ENCODE measurements at regions of chr14 and their contacts with region 1.

Region 1: DNA sequence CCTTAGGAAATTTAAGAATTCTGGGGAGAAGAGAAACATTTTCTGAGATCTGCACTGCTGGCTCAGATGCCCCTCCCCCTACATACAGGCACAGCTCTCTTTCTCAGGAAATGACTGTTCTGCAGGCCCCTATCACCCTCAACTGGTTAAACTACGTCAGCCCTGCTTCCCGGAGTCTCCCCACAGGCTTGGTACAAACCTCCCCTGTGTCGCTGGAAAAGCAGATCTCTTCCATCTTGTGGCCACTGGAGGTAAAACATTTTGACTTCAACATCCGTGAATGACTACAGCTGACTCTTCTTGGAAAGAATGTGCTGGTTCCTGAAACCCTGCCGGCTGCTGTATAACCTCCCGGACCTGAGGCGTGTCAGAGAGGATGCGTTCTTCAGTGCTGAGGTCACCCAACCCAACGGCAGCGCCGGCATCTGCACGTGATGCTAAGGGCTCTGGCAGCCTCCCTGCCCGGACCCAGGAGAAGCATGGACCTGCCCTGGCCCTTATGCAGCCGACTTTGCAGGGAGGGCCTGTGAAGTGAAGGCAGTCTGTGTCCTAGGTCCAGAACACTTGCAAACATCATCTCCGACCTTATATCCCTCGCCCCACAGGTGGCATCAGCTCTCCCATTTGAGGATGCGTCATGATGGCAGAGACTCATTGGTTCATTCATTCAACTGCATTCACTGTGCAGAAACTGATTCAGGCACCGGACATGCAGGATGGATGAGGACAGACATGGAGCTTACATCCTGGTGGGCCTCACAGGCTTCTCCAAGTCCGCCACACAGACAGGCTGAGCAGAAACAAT is 129.3 kb downstream of the GCH1 start:
- DNase-seq: peak; percentile 73
- H3K4me3 Mint-ChIP-seq: peak overlapping the region; percentile 68
- H3K27ac Mint-ChIP-seq: peak overlapping the region; percentile 79
- H3K4me1 Mint-ChIP-seq: peaks cover 40% of the 10 kb centered on the region
- H3K27me3 Mint-ChIP-seq: peaks cover 40% of the 10 kb centered on the region

Region 2: DNA sequence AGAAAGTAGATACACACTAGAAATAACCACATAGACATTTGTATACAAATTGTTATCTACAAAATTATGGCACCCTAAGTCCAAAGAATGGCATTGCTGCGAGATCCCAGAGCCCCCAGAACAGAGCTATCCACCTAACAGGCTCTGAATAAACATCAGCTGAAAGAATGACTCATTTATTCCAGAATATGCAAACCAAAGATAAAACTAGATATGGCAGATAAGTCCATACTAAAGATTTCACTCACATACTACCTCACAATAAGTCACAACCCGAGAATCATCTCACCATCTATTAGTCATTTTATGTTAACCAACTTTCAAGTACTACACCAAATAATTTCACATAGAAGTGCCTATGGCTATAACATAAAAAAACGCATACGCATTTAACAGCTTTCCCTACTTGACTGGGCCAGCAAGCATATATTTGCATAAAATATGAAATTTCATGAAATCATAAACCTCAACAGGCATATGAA is 337.8 kb before region 1 on chr14:
- intact Hi-C with region 1: loop called (anchors 1 kb)
- DNase-seq: no peak
- H3K4me3 Mint-ChIP-seq: peak overlapping the region; percentile 74
- H3K27ac Mint-ChIP-seq: peak overlapping the region; percentile 89
- H3K4me1 Mint-ChIP-seq: peaks cover 73% of the 10 kb centered on the region
- H3K27me3 Mint-ChIP-seq: no peaks in the 10 kb centered on the region

Region 3: GRCh38 chr14:54565785-54566409 is 207.5 kb before region 1 on chr14:
- intact Hi-C with region 1: loop called (anchors 1 kb)
- DNase-seq: peak; percentile 61
- H3K4me3 Mint-ChIP-seq: peak overlapping the region; percentile 75
- H3K27ac Mint-ChIP-seq: no peak overlapping the region
- H3K4me1 Mint-ChIP-seq: peaks cover 21% of the 10 kb centered on the region
- H3K27me3 Mint-ChIP-seq: peaks cover 54% of the 10 kb centered on the region

Region 4: DNA sequence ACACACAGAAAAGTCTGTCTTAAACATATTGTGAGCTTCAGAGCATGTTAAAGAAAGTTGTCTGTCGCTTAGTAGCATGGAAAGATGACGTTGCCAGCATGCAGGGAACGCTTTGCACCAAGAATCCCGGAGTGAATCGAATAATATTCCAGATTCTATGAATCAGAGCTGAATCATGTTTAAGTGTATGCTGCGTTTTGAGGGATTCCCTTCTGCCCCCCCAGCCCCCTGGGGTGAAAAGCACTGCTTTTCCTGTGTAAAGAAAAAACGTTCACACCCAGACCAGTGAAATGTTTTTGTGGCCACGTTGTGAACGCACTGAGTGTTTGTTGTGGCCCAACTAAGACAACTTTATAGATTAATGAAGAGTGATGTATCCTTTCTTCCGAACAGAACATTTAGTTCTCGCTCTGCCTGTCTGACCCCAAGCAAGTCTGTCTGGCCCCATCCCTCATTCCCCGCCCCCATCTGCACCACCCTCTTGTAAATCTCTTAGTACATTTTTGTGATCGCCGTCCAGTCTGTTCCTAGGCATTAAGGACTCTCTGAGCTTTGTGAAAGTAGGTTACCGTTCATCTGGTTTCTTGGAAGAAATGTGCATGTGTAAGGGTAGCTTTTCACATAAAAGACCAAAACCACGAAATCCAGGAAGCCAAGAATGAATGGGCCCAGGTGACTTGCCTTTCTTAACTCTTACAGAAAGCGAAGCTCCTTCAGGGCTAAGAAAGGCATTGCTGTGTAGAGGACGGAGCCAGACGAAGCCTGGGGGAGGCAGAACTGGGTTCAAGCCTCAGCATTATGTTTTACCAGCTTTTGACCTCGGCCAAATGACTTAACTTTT is 103.4 kb before region 1 on chr14:
- intact Hi-C with region 1: loop called (anchors 1 kb)
- DNase-seq: peak; percentile 5
- H3K4me3 Mint-ChIP-seq: no peak overlapping the region
- H3K27ac Mint-ChIP-seq: peak overlapping the region; percentile 11
- H3K4me1 Mint-ChIP-seq: peaks cover 40% of the 10 kb centered on the region
- H3K27me3 Mint-ChIP-seq: peaks cover 59% of the 10 kb centered on the region

Region 5: GRCh38 chr14:54730156-54730961 is 43.0 kb before region 1 on chr14:
- intact Hi-C with region 1: loop called (anchors 1 kb)
- DNase-seq: peak; percentile 48
- H3K4me3 Mint-ChIP-seq: peak overlapping the region; percentile 28
- H3K27ac Mint-ChIP-seq: peak overlapping the region; percentile 56
- H3K4me1 Mint-ChIP-seq: peaks cover 36% of the 10 kb centered on the region
- H3K27me3 Mint-ChIP-seq: peaks cover 40% of the 10 kb centered on the region

Region 6: GRCh38 chr14:54787261-54787660 is 13.9 kb after region 1 on chr14:
- intact Hi-C with region 1: no loop called
- DNase-seq: no peak
- H3K4me3 Mint-ChIP-seq: no peak overlapping the region
- H3K27ac Mint-ChIP-seq: no peak overlapping the region
- H3K4me1 Mint-ChIP-seq: peaks cover 10% of the 10 kb centered on the region
- H3K27me3 Mint-ChIP-seq: peaks cover 1% of the 10 kb centered on the region

Region 7: GRCh38 chr14:54798465-54799124 is 25.2 kb after region 1 on chr14:
- intact Hi-C with region 1: no loop called
- DNase-seq: no peak
- H3K4me3 Mint-ChIP-seq: no peak overlapping the region
- H3K27ac Mint-ChIP-seq: no peak overlapping the region
- H3K4me1 Mint-ChIP-seq: no peaks in the 10 kb centered on the region
- H3K27me3 Mint-ChIP-seq: peaks cover 30% of the 10 kb centered on the region

Region 8: DNA sequence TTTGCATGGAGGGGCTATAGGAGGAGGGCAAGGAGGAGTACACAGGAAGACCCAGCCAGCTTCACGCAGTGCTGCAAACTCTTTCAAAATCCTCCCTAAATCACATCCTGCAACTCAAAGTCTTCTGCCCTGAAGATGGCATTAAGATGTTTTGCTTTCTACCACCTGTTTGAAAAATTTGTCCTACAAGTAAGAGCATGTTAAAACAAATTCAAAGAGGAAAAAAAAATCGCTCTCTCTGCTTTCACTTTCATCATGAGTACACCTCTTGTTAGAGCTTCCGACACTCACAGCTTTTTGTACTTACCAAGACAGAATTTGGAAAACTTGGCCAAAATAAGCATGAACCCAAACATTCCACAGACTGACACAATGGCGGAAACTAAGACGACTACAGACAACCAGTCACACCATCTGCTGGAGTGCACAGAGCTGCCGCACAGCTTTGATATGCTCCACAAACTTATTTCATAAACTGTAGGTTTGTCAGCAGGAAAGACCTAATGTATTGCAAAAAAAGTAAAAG is 107.9 kb after region 1 on chr14:
- intact Hi-C with region 1: loop called (anchors 1 kb)
- DNase-seq: peak; percentile 30
- H3K4me3 Mint-ChIP-seq: peak overlapping the region; percentile 86
- H3K27ac Mint-ChIP-seq: peak overlapping the region; percentile 94
- H3K4me1 Mint-ChIP-seq: peaks cover 53% of the 10 kb centered on the region
- H3K27me3 Mint-ChIP-seq: no peaks in the 10 kb centered on the region

Measured in activated T-helper 1 cell treated with anti-CD3 and anti-CD28 coated beads, Interleukin-12 subunit alpha, Interleukin-12 subunit beta, Interleukin-2, Interleukin-4 antibody, amounts not matched to agents 30 ng/mL and 10 ng/mL and 1 ng/mL, durations not matched to agents 14 hours and 24 hours and 36 hours (primary cell).